ENCODE measurements at regions of chr17 and their contacts with region 1.

Region 1: GRCh38 chr17:6069539-6070429 is at the start of gene WSCD1:
- DNase-seq: peak; percentile 44
- H3K4me3 ChIP-seq: peak within 1 kb of the TSS; percentile 75 to 87 (median 86)
- H3K27ac ChIP-seq: peak within 1 kb of the TSS; percentile 46
- H3K4me1 ChIP-seq: peaks cover 14% of the 10 kb centered on the region
- H3K27me3 ChIP-seq: peaks cover 10 to 16% of the 10 kb centered on the region in 2 experiments
- CTCF ChIP-seq: no peak
- POLR2A ChIP-seq: no peak
- total RNA-seq, gene WSCD1: 45.7 and 49.4 TPM in 2 replicates

Region 2: DNA sequence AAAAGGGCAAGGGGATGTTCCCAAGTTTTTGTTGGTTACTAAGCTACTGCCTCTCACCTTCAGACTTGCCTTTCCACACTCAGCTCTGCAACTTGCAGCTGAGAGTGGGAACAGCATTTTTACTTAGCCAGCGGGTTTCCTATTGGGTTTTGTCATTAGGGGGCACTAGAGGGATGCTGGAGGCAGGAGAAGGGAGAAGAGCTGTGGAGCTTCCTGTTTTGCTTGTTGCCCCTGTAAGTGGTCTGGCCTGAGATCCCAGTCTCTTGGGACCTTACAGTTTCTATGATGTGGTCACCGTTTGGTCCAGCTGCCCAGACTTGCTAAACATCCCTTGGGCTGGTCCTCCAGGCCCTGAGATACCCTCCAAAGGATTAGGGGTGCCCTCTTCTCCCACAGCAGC is 275.9 kb before region 1 on chr17:
- CTCF ChIA-PET with region 1: interaction called, 22 read pairs
- POLR2A ChIA-PET with region 1: no interaction called
- dilution Hi-C with region 1: no loop called
- intact Hi-C with region 1: loop called (anchors 1 kb)
- DNase-seq: peak; percentile 64
- H3K4me3 ChIP-seq: no peak overlapping the region
- H3K27ac ChIP-seq: no peak overlapping the region
- H3K4me1 ChIP-seq: no peaks in the 10 kb centered on the region
- H3K27me3 ChIP-seq: no peaks in the 10 kb centered on the region
- CTCF ChIP-seq: peak; percentile 26 to 43
- POLR2A ChIP-seq: no peak

Region 3: GRCh38 chr17:5980941-5981340 is 88.8 kb before region 1 on chr17:
- CTCF ChIA-PET with region 1: no interaction called
- POLR2A ChIA-PET with region 1: no interaction called
- dilution Hi-C with region 1: no loop called
- intact Hi-C with region 1: no loop called
- DNase-seq: no peak
- H3K4me3 ChIP-seq: no peak overlapping the region
- H3K27ac ChIP-seq: no peak overlapping the region
- H3K4me1 ChIP-seq: no peaks in the 10 kb centered on the region
- H3K27me3 ChIP-seq: peaks cover 2 to 10% of the 10 kb centered on the region in 2 experiments
- CTCF ChIP-seq: no peak
- POLR2A ChIP-seq: no peak

Region 4: GRCh38 chr17:6098050-6098822 is 28.5 kb after region 1 on chr17:
- CTCF ChIA-PET with region 1: interaction called, 8 read pairs
- POLR2A ChIA-PET with region 1: no interaction called
- dilution Hi-C with region 1: no loop called
- intact Hi-C with region 1: loop called (anchors 1 kb)
- DNase-seq: peak; percentile 98
- H3K4me3 ChIP-seq: no peak overlapping the region
- H3K27ac ChIP-seq: peak overlapping the region; percentile 91
- H3K4me1 ChIP-seq: peaks cover 40% of the 10 kb centered on the region
- H3K27me3 ChIP-seq: no peaks in the 10 kb centered on the region
- CTCF ChIP-seq: no peak
- POLR2A ChIP-seq: no peak

Region 5: GRCh38 chr17:6257336-6257735 is 187.6 kb after region 1 on chr17:
- CTCF ChIA-PET with region 1: no interaction called
- POLR2A ChIA-PET with region 1: no interaction called
- dilution Hi-C with region 1: no loop called
- intact Hi-C with region 1: loop called (anchors 1 kb)
- DNase-seq: peak; percentile 88
- H3K4me3 ChIP-seq: no peak overlapping the region
- H3K27ac ChIP-seq: peak overlapping the region; percentile 100
- H3K4me1 ChIP-seq: peaks cover 33% of the 10 kb centered on the region
- H3K27me3 ChIP-seq: no peaks in the 10 kb centered on the region
- CTCF ChIP-seq: no peak
- POLR2A ChIP-seq: no peak

Region 6: GRCh38 chr17:6413065-6413464 is 343.3 kb after region 1 on chr17:
- CTCF ChIA-PET with region 1: interaction called, 7 read pairs
- POLR2A ChIA-PET with region 1: no interaction called
- dilution Hi-C with region 1: no loop called
- intact Hi-C with region 1: loop called (anchors 2 kb)
- DNase-seq: peak; percentile 67
- H3K4me3 ChIP-seq: no peak overlapping the region
- H3K27ac ChIP-seq: no peak overlapping the region
- H3K4me1 ChIP-seq: no peaks in the 10 kb centered on the region
- H3K27me3 ChIP-seq: no peaks in the 10 kb centered on the region
- CTCF ChIP-seq: peak; percentile 50 to 56
- POLR2A ChIP-seq: no peak